Heart right ventricle (tissue), 16 donors: ENCODE measurements at regions of chr6 and their contacts with region 1.

Region 1: DNA sequence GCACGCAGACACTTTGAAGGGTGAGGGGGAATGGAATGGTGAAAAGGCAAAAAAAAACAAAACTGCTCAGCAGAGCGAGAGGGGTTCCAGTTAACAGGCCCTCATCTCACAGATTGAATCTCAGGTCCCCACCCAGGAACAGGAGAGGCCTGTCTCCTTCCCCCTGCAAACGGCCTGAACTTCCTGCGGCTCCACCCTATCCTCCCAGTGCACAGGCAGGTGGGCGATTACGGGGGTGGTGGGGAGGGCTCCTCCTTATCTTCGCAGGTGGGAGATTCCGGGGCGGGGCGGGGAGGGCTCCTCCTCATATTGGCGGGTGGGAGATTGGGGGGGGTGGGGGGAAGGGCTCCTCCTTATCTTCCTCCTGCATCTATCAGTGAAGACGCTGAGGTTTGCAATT is 129.0 kb downstream of the SOX4 start:
- DNase-seq: peak in 1 of 2 donors; percentile 16
- ATAC-seq: peak in 2 of 8 donors; percentile 31 to 51
- H3K4me3 ChIP-seq: no peak overlapping the region
- H3K27ac ChIP-seq: no peak overlapping the region
- H3K4me1 ChIP-seq: peaks cover 0 to 10% (median 0%) of the 10 kb centered on the region in 9 donors
- H3K27me3 ChIP-seq: no peaks in the 10 kb centered on the region
- CTCF ChIP-seq: no peak

Region 2: DNA sequence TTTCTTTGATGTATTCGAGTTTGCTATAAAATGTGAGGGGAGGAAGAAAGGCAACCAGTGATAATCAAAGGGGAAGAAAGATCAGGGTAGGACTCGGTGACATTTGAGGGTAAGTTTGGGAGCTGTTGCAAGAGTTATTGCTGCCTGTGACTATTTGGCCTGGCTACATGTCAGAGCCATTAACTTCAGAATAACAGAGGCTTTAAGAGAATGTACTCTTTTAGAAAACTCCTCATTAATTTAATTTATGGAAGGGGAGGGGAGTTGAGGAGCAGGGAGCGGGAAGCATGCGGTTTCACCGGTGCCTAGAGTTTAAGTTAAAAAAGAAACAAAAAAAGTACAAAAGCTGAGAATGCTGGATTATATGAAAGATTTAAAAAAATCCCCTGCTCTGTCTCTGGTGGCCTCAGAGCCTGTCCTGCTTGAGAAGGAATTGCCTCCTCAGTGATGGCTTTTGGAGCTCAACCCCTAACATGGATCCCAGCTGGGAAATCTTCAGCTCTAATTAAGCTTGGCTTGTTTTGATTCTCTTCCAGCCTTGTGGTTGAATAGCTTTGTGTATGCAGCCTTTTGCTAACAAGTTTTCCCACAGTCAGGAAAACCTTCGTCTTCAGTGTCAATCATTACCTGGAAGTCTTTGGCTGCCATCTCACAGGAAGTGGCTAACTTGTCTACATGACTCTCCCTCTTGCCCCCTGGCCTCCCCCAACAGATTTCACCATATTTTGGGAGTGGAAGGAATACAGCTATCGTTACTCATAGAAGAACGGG is 109.2 kb after region 1 on chr6:
- intact Hi-C with region 1: no loop called
- DNase-seq: no peak
- ATAC-seq: no peak
- H3K4me3 ChIP-seq: no peak overlapping the region
- H3K27ac ChIP-seq: peak overlapping the region in 1 of 10 donors; percentile 23
- H3K4me1 ChIP-seq: peaks cover 0 to 9% (median 0%) of the 10 kb centered on the region in 9 donors
- H3K27me3 ChIP-seq: no peaks in the 10 kb centered on the region
- CTCF ChIP-seq: no peak

Region 3: DNA sequence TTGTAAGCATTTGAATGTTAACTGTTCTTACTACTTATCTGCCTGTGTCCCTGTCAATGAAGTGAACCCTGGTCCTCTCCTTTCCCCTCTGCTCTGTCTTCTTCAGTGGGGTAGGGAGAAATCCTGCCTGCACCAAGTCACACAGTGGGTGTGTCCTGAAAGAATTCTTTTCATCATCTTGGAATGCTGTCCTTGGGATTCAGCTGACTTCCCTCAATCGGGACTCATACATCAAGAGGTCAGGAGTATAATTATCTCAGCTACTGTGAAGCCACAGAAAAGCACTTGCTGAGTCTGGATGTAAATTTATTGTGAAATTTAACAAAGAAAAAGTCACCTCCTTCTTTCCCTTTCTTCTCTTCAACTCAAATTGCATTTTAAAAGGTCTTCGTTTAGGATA is 199.6 kb after region 1 on chr6:
- intact Hi-C with region 1: loop called in 1 of 10 experiments (anchors 10 kb)
- DNase-seq: no peak
- ATAC-seq: no peak
- H3K4me3 ChIP-seq: no peak overlapping the region
- H3K27ac ChIP-seq: no peak overlapping the region
- H3K4me1 ChIP-seq: peaks cover 0 to 10% (median 3%) of the 10 kb centered on the region in 9 donors
- H3K27me3 ChIP-seq: no peaks in the 10 kb centered on the region
- CTCF ChIP-seq: no peak

Region 4: DNA sequence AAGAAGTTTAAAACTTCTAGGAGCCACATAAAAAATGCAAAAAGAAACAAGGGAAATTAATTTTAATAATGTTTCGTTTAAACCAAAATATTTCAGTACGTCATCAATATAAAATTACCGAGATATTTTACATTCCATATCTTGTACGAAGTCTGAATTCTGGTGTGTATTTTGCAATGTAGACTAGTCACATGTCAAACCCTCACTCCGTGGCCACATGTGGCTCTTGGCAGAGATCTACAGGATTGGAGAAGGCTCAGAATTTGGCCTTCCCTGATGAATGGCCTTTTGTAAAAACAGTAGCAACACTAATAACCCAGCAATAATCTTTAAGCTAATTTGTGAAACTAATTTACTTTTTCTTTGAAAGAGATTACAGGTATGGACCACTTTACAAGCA is 357.3 kb after region 1 on chr6:
- intact Hi-C with region 1: no loop called
- DNase-seq: no peak
- ATAC-seq: peak in 3 of 8 donors; percentile 49 to 67 (median 51)
- H3K4me3 ChIP-seq: no peak overlapping the region
- H3K27ac ChIP-seq: no peak overlapping the region
- H3K4me1 ChIP-seq: no peaks in the 10 kb centered on the region
- H3K27me3 ChIP-seq: no peaks in the 10 kb centered on the region
- CTCF ChIP-seq: no peak